Activated CD8-positive, alpha-beta T cell treated with anti-CD3 and anti-CD28 coated beads, Interleukin-2, amount 10 ng/mL, durations not matched to agents 7 days and 5 days (primary cell): ENCODE measurements at regions of chr9 and their contacts with region 1.

Region 1: GRCh38 chr9:17810728-17811571 is 232.1 kb downstream of the SH3GL2 start:
- DNase-seq: peak; percentile 61
- ATAC-seq: no peak
- H3K4me3 Mint-ChIP-seq: no peak overlapping the region
- H3K27ac Mint-ChIP-seq: no peak overlapping the region
- H3K4me1 Mint-ChIP-seq: no peaks in the 10 kb centered on the region
- H3K27me3 Mint-ChIP-seq: no peaks in the 10 kb centered on the region

Region 2: GRCh38 chr9:18208154-18209059 is 397.5 kb after region 1 on chr9:
- CTCF ChIA-PET with region 1: interaction called, 21 read pairs
- POLR2A ChIA-PET with region 1: no interaction called
- DNase-seq: no peak
- ATAC-seq: no peak
- H3K4me3 Mint-ChIP-seq: no peak overlapping the region
- H3K27ac Mint-ChIP-seq: no peak overlapping the region
- H3K4me1 Mint-ChIP-seq: no peaks in the 10 kb centered on the region
- H3K27me3 Mint-ChIP-seq: no peaks in the 10 kb centered on the region